AG04449 (cell line): ENCODE measurements at regions of chr14 and their contacts with region 1.

Region 1: GRCh38 chr14:22973217-22974032 is 8.9 kb downstream of the AJUBA start:
- DNase-seq: no peak
- H3K4me3 ChIP-seq: no peak overlapping the region
- CTCF ChIP-seq: peak; percentile 52

Region 2: DNA sequence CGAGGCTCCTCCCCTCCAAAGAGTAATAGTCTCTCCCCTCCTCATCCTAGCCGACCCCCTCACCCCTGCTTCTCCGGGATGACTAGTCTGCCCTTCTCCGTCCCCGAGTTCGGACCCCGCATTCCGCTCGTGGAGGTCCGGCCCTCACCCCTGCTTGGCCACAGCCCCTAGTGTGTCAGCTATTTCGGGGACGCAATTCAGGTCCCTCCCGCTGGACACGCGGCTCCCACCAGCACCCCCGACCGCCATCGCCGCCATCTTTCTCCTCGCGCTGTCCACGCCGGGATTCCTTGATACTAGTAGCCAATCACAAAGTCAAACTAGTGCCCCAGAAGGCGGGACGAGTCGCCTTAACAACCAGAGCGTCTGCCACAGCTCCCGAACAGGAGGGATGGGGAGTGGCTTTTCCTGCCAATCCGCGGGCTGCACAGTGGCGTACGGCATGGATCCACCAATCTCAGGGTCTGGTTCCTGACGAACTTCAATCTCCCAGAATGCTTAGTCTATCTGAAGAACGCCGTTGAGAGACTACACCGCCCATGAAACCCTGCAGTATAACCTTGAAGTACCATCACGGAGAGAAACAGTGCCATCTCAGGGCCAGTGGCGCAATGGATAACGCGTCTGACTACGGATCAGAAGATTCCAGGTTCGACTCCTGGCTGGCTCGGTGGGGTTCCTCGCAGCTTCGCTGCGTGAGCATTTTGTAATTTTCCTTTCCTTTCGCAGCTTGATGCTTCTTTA is 44.1 kb before region 1 on chr14 and contains the start of gene PRMT5:
- CTCF ChIA-PET with region 1: interaction called, 25 read pairs
- POLR2A ChIA-PET with region 1: interaction called, 3 read pairs
- DNase-seq: peak; percentile 99
- H3K4me3 ChIP-seq: peak within 1 kb of the TSS; percentile 100
- CTCF ChIP-seq: no peak

Region 3: DNA sequence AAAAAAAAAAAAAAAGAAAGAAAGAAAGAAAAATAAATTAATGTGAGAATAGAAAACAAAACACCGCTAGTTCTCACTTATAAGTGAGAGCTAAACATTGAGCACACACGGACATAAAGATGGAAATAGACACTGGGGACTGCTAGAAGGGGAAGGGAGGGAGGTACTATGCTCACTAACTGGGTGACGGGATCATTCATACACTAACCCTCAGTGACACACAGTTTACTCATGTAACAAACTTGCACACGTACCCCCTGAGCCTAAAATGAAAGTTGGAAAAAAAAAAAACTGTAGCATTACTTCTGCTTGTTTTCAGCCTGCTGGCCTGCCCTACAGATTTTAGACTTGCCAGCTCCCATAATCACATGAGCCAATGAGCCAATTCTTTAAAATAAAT is 33.7 kb before region 1 on chr14:
- CTCF ChIA-PET with region 1: interaction called, 11 read pairs
- POLR2A ChIA-PET with region 1: interaction called, 3 read pairs
- DNase-seq: no peak
- H3K4me3 ChIP-seq: no peak overlapping the region
- CTCF ChIP-seq: no peak

Region 4: DNA sequence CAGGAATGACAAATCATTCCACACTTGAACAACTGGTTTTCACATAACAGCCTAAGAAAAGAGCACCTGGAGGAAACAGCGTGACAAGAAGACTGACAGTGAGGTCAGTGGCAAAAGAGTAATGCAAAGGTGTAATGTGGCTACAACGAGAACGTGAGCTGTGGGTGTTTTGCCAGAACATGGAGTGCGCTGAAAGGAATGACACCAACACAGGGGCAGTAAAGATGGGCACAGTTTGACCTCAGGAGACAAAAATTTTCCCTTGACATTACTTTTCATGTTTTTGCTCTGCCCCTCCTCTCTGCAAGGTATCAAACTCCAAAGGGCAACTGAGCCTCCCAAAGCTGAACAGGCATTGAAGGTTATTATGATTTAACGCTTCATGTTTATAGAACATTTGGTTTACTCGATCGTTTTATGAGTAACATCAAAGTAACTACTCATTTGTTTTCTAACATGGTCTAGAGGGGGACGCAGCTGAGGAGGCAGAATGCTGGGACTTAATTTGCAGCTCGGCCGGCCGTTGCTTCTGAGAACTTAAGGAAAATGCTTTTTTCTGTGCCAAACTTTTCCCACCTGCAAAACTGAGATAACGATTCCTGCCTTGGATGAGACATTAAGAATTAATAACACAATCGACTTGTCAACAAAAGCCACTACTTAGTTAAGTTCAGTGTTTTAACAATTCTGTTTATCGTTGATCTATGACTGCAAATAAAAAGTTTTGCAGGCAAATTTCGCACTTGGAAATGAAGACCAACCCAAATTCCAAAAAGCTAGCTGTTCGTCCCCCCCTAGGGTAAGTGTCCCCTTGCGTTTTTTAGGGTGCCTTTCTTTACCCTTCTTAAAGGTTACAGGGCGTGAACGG is 17.5 kb before region 1 on chr14:
- CTCF ChIA-PET with region 1: interaction called, 114 read pairs
- POLR2A ChIA-PET with region 1: interaction called, 18 read pairs
- DNase-seq: no peak
- H3K4me3 ChIP-seq: peak overlapping the region; percentile 66
- CTCF ChIP-seq: no peak

Region 5: DNA sequence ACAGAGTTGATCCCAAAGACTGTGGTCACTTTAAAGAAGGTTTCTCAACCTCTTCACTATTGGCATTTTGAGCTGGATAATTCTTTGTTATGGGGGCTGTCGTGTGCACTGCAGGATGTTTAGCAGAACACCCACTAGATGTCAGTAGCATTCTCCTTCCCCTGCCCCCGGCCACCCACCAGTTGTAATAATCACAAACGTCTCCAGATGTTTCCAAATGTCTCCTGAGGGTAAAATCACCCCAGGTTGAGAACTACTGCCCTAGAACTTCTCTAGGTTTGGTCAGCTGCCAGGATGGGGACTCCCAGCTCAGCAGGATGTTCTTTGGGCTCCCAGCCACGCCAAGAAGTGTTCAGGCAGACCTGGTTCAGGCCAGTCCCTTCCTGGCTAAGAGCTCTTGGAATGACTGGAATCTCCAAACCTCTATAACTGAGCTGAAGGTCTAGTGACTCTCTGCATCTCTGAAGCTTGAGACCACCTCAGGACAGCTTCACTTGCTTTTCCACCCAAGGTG is 21.4 kb after region 1 on chr14:
- CTCF ChIA-PET with region 1: interaction called, 241 read pairs
- POLR2A ChIA-PET with region 1: no interaction called
- DNase-seq: no peak
- H3K4me3 ChIP-seq: no peak overlapping the region
- CTCF ChIP-seq: peak; percentile 65

Region 6: DNA sequence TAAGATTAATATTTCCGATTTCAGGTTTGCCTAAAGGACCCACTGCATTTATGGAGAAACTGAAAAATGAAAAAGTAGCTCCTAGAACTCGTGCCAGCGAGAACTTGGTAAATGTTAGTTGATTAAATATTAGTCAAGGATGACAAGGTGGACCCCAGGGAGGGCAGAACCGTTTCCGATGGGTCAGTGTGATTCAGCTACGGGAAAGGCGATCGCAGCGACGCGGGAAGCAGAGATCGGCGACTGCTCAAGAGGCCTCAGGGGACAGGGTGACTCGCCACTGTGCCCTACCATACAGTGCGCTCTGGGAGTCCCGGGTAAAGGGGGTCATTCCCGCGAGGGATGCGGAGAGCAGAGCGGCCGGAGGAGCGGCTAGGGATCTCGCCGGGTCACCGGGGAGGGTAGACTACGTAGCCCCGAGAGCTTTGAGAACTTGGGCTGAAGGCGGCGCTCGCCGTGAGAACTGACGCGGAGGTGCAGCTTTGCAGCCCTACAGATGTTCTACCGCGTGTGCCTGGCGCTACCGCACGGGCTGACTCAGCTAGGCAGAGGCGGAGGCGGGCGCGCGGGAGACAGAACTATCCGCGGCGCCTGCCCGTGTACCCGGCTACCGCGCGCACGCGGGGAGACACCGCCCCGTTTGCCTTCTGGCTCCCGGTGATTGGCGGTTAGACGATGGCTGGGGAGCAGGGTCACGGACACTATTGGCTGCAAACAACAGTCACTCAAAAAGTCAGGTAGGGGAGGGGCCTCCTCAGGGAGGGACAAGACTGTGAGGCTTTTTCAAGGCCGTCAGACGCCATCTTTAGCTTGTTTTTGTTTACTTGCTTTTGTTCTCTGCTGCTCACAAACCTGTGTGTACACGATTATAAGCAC is 33.4 kb after region 1 on chr14:
- CTCF ChIA-PET with region 1: interaction called, 10 read pairs
- POLR2A ChIA-PET with region 1: no interaction called
- DNase-seq: peak; percentile 86
- H3K4me3 ChIP-seq: peak overlapping the region; percentile 70
- CTCF ChIP-seq: peak; percentile 54

Region 7: GRCh38 chr14:23109769-23110168 is 136.3 kb after region 1 on chr14:
- CTCF ChIA-PET with region 1: interaction called, 10 read pairs
- POLR2A ChIA-PET with region 1: no interaction called
- DNase-seq: no peak
- H3K4me3 ChIP-seq: no peak overlapping the region
- CTCF ChIP-seq: no peak